CD8-positive, alpha-beta T cell (primary cell): ENCODE measurements at regions of chr11 and their contacts with region 1.

Region 1: DNA sequence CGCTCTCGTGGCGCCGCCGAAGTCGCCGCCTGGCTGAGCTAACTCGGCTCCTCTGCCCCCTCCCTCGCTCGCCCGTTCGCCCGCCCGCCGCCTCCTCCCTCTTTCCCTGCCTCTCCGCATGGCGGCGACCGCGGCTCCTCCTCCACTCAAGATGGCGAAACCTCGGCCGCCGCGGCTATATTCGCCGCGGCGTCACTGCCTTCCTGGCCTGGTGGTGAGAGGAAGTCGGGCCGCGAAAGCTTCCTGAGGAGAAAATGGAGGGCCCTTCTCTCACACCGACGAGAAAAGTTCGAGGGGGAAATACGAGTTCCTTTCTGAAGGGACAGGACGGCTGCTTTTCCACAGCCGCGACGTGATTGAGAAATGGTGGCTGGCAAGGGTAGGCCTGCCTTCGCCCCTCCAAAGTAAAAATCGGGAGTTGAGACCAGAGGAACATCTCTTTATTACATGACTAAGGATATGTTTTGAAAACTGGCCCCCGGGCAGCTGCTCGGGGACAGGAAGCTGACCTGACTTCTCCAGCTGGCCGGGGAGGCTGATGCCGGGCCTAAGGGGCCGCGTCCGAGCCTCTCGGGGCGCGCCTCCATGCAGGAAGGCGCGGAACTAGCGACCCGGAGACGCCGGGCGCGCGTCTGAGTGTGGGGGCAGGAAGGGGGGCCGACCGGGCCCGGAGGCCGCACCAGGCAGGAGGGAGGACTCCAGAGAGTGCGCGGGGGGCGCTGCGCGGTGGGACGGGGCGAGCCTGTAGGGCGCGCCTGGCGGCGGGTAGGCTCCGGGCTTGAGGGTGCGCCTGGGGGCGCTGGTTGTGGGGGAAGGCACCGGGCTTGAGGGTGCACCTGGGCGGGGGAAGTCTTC is at the start of gene DDX6:
- DNase-seq: peak; percentile 81 to 95 (median 93)
- ATAC-seq: peak; percentile 65
- H3K4me3 ChIP-seq: peak within 1 kb of the TSS; percentile 71 to 94
- H3K4me3 Mint-ChIP-seq: peak within 1 kb of the TSS; percentile 100
- H3K27ac ChIP-seq: peak within 1 kb of the TSS; percentile 98
- H3K27ac Mint-ChIP-seq: peak within 1 kb of the TSS; percentile 99
- H3K4me1 ChIP-seq: peaks cover 27% of the 10 kb centered on the region
- H3K4me1 Mint-ChIP-seq: peaks cover 36% of the 10 kb centered on the region
- H3K27me3 ChIP-seq: no peaks in the 10 kb centered on the region
- H3K27me3 Mint-ChIP-seq: no peaks in the 10 kb centered on the region
- CTCF ChIP-seq: peak; percentile 18
- total RNA-seq, gene DDX6: 409 TPM

Region 2: GRCh38 chr11:118572061-118572980 is 219.0 kb before region 1 on chr11 and contains the start of gene ARCN1:
- CTCF ChIA-PET with region 1: no interaction called
- POLR2A ChIA-PET with region 1: no interaction called
- intact Hi-C with region 1: loop called in 1 of 2 experiments (anchors 2 kb)
- DNase-seq: peak; percentile 61 to 91 (median 77)
- ATAC-seq: peak; percentile 91
- H3K4me3 ChIP-seq: peak within 1 kb of the TSS; percentile 99 to 100
- H3K4me3 Mint-ChIP-seq: peak within 1 kb of the TSS; percentile 94
- H3K27ac ChIP-seq: peak within 1 kb of the TSS; percentile 96 to 99
- H3K27ac Mint-ChIP-seq: peak within 1 kb of the TSS; percentile 97
- H3K4me1 ChIP-seq: peaks cover 34% of the 10 kb centered on the region
- H3K4me1 Mint-ChIP-seq: peaks cover 49% of the 10 kb centered on the region
- H3K27me3 ChIP-seq: no peaks in the 10 kb centered on the region
- H3K27me3 Mint-ChIP-seq: no peaks in the 10 kb centered on the region
- CTCF ChIP-seq: no peak
- total RNA-seq, gene ARCN1: 77.8 to 81.2 TPM

Region 3: DNA sequence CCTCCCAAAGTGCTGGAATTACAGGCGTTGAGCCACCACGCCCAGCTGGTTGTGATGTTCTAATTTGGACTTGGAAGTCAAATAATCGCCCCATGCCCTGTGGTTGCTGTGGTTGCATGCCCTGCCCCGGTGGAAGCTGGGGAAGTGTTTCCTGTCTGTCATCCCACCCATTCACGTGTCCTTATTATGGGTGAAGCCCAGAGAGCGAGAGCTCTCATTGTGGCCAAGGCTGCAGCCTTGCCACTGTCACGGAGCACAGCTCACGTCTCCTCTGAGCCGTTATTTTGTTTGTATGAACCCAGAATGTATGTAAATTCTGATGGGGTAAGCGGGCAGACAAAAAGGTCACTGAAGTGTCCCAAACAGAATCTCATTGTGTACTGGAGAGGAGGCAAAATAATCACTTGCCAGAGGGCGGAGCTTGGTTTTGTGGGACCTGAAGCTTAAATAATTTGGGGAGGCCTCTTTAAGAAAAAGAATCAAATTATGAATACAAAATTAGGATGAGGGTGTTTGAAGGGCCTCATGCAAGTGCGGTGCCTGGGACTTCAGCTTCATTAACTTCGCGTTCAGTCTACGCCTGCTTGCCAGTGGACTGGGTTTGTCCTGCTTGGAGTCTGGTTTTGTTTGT is 86.1 kb before region 1 on chr11:
- CTCF ChIA-PET with region 1: interaction called, 6 read pairs
- POLR2A ChIA-PET with region 1: interaction called, 24 read pairs
- intact Hi-C with region 1: no loop called
- DNase-seq: peak; percentile 17 to 84 (median 59)
- ATAC-seq: peak; percentile 75
- H3K4me3 ChIP-seq: peak overlapping the region in 1 of 2 experiments; percentile 2
- H3K4me3 Mint-ChIP-seq: peak overlapping the region; percentile 72
- H3K27ac ChIP-seq: peak overlapping the region; percentile 1 to 27
- H3K27ac Mint-ChIP-seq: peak overlapping the region; percentile 92
- H3K4me1 ChIP-seq: peaks cover 37% of the 10 kb centered on the region
- H3K4me1 Mint-ChIP-seq: peaks cover 50% of the 10 kb centered on the region
- H3K27me3 ChIP-seq: no peaks in the 10 kb centered on the region
- H3K27me3 Mint-ChIP-seq: no peaks in the 10 kb centered on the region
- CTCF ChIP-seq: no peak

Region 4: GRCh38 chr11:118870396-118871345 is 79.3 kb after region 1 on chr11:
- CTCF ChIA-PET with region 1: interaction called, 50 read pairs
- POLR2A ChIA-PET with region 1: interaction called, 119 read pairs
- intact Hi-C with region 1: loop called (anchors 1 to 2 kb)
- DNase-seq: peak in 3 of 9 experiments; percentile 19 to 72 (median 61)
- ATAC-seq: peak; percentile 41
- H3K4me3 ChIP-seq: peak overlapping the region; percentile 22 to 30
- H3K4me3 Mint-ChIP-seq: peak overlapping the region; percentile 79
- H3K27ac ChIP-seq: peak overlapping the region; percentile 83 to 86
- H3K27ac Mint-ChIP-seq: peak overlapping the region; percentile 99
- H3K4me1 ChIP-seq: peaks cover 61% of the 10 kb centered on the region
- H3K4me1 Mint-ChIP-seq: peaks cover 60% of the 10 kb centered on the region
- H3K27me3 ChIP-seq: no peaks in the 10 kb centered on the region
- H3K27me3 Mint-ChIP-seq: no peaks in the 10 kb centered on the region
- CTCF ChIP-seq: no peak

Region 5: GRCh38 chr11:118895142-118896039 is 104.1 kb after region 1 on chr11:
- CTCF ChIA-PET with region 1: interaction called, 40 read pairs
- POLR2A ChIA-PET with region 1: interaction called, 182 read pairs
- intact Hi-C with region 1: loop called (anchors 1 kb)
- DNase-seq: peak; percentile 54 to 92 (median 80)
- ATAC-seq: peak; percentile 73
- H3K4me3 ChIP-seq: peak overlapping the region in 1 of 2 experiments; percentile 35
- H3K4me3 Mint-ChIP-seq: peak overlapping the region; percentile 63
- H3K27ac ChIP-seq: peak overlapping the region; percentile 70 to 77
- H3K27ac Mint-ChIP-seq: peak overlapping the region; percentile 95
- H3K4me1 ChIP-seq: peaks cover 83% of the 10 kb centered on the region
- H3K4me1 Mint-ChIP-seq: peaks cover 84% of the 10 kb centered on the region
- H3K27me3 ChIP-seq: no peaks in the 10 kb centered on the region
- H3K27me3 Mint-ChIP-seq: no peaks in the 10 kb centered on the region
- CTCF ChIP-seq: no peak

Region 6: GRCh38 chr11:118997627-118998387 is 206.5 kb after region 1 on chr11 and contains the start of gene CENATAC:
- CTCF ChIA-PET with region 1: no interaction called
- POLR2A ChIA-PET with region 1: interaction called, 6 read pairs
- intact Hi-C with region 1: loop called in 1 of 2 experiments (anchors 2 kb)
- DNase-seq: peak; percentile 87 to 97 (median 96)
- ATAC-seq: peak; percentile 94
- H3K4me3 ChIP-seq: peak within 1 kb of the TSS; percentile 89 to 95
- H3K4me3 Mint-ChIP-seq: peak within 1 kb of the TSS; percentile 84
- H3K27ac ChIP-seq: peak within 1 kb of the TSS; percentile 59 to 92
- H3K27ac Mint-ChIP-seq: peak within 1 kb of the TSS; percentile 88
- H3K4me1 ChIP-seq: peaks cover 23% of the 10 kb centered on the region
- H3K4me1 Mint-ChIP-seq: peaks cover 36% of the 10 kb centered on the region
- H3K27me3 ChIP-seq: no peaks in the 10 kb centered on the region
- H3K27me3 Mint-ChIP-seq: no peaks in the 10 kb centered on the region
- CTCF ChIP-seq: no peak
- total RNA-seq, gene CENATAC: 103 to 116 TPM

Region 7: DNA sequence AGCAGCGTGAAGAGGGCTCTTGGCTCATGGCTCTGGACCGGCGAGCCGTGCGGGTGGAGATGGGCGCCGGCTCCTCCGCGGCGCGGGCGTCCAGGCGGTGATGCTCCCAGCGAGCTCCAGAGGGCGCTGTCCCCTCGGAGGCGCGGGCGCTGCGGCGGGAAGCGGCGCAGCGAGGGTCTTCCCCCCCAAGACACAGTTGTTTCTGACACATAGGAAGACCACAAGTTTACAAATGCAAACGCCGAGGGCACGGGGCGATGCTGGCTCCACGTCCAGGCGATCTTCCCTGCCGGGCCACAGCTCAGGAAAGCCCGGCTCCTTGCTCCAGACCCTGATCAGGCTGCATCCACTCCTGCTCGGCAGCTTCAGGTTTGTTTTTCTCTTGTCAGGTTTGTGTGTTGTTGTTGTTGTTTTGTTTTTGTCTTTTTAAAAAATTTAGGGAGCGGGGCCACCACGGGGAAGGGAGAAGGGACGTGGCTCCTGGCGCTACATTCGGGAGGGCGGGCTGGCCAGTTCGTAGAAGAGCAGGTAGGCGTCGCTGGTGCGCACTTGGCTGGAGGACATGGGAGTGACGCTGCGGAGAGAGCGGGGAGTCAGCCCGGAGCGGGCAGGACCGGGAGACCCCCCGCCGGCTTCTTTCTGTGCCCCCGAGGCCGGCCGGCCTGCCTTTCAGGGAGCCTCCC is 565.2 kb after region 1 on chr11:
- CTCF ChIA-PET with region 1: no interaction called
- POLR2A ChIA-PET with region 1: no interaction called
- intact Hi-C with region 1: no loop called
- DNase-seq: peak; percentile 54 to 86 (median 73)
- ATAC-seq: peak; percentile 92
- H3K4me3 ChIP-seq: peak overlapping the region; percentile 73 to 96
- H3K4me3 Mint-ChIP-seq: peak overlapping the region; percentile 91
- H3K27ac ChIP-seq: no peak overlapping the region
- H3K27ac Mint-ChIP-seq: peak overlapping the region; percentile 76
- H3K4me1 ChIP-seq: no peaks in the 10 kb centered on the region
- H3K4me1 Mint-ChIP-seq: peaks cover 7% of the 10 kb centered on the region
- H3K27me3 ChIP-seq: peaks cover 0 to 15% of the 10 kb centered on the region in 2 experiments
- H3K27me3 Mint-ChIP-seq: peaks cover 20% of the 10 kb centered on the region
- CTCF ChIP-seq: peak; percentile 100